Lower lobe of right lung (tissue), 2 donors: ENCODE measurements at regions of chr15 and their contacts with region 1.

Region 1: DNA sequence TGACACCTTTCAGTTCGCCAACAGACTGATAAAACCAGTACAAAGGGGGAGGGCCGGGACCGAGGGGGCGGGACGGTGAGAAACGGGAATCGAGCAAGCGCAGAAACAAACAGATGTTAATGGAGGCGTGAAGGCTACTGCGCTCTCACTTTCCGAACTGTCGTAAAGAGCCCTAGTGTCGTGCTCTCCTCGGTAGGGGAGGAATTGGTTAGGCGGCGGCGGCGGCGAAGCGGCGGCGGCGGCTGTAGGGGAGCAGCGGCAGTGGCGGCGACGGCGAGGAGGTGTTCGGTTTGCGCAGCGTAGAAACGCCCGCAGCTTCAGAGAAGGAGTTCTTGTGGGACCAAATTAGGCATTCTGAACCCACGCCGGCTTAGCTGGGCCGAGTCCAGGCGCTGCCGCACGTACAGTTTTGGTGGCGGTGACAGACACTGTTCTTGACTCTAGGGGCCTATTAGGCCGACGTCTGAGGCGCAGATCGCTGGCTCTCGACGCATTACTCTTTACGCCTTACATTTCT is at the start of gene RNF111:
- DNase-seq: peak; percentile 91
- ATAC-seq: peak; percentile 98 to 99
- H3K4me3 ChIP-seq: peak within 1 kb of the TSS; percentile 98
- H3K27ac ChIP-seq: peak within 1 kb of the TSS; percentile 88
- H3K4me1 ChIP-seq: peaks cover 25% of the 10 kb centered on the region
- H3K27me3 ChIP-seq: no peaks in the 10 kb centered on the region
- CTCF ChIP-seq: no peak
- total RNA-seq, gene RNF111: 39.8 TPM

Region 2: DNA sequence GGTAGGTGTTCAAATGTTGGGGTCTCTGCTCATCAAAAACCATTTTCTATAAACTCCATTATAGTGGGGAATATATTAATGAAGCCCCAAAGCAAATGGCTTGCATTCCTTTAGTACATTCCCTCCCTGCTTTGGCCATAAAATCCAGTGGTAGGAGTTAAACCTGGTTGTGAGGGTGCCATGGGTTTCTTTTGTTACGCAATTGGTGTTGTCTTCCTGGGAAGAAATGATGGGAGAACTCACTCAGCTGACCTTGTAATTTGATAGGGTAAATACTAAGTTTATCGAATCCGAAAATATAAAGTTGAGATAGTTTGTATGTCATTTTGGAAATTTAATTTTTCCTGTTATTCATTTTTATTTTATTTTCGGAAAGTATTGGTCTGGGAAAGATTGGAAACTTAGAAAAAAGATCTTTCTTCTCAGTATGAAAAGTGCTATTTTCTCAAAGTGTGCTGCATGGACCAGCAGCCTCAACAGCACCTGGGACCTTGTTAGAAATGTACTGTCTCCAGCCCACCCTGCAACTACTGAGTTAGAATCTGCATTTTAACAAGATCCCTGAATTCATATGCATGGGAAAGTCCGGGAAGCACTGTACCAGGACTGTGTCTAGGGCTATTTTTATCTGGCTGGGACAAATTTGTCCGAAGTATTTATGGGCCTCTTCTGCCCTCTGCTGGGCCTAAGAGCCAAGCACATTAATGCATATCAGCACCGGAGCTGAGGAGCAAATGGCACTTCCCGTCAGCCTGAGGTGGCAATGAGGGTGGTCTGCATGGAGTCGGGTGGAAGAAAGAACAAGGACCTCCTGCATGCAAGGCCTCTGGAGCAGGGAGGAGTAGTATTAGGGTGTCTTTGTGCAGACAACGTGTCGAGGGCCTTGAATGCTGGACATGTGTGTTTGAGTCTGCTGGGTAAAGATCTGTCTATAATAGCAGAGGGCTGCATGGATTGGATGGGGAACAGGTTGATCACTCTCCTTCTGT is 505.1 kb after region 1 on chr15:
- intact Hi-C with region 1: loop called (anchors 10 kb)
- DNase-seq: peak; percentile 52
- ATAC-seq: peak; percentile 91 to 94
- H3K4me3 ChIP-seq: no peak overlapping the region
- H3K27ac ChIP-seq: no peak overlapping the region
- H3K4me1 ChIP-seq: peaks cover 6% of the 10 kb centered on the region
- H3K27me3 ChIP-seq: no peaks in the 10 kb centered on the region
- CTCF ChIP-seq: peak; percentile 94